ENCODE measurements at regions of chr17 and their contacts with region 1.

Region 1: GRCh38 chr17:19648475-19649406 is at the start of gene ALDH3A2:
- DNase-seq: peak; percentile 99 to 100
- ATAC-seq: peak; percentile 100
- H3K4me3 ChIP-seq: peak within 1 kb of the TSS; percentile 56 to 90
- H3K27ac ChIP-seq: peak within 1 kb of the TSS; percentile 52 to 98
- H3K4me1 ChIP-seq: peaks cover 0 to 23% of the 10 kb centered on the region in 2 donors
- H3K27me3 ChIP-seq: no peaks in the 10 kb centered on the region
- total RNA-seq, gene ALDH3A2: 55.7 to 78.6 TPM

Region 2: DNA sequence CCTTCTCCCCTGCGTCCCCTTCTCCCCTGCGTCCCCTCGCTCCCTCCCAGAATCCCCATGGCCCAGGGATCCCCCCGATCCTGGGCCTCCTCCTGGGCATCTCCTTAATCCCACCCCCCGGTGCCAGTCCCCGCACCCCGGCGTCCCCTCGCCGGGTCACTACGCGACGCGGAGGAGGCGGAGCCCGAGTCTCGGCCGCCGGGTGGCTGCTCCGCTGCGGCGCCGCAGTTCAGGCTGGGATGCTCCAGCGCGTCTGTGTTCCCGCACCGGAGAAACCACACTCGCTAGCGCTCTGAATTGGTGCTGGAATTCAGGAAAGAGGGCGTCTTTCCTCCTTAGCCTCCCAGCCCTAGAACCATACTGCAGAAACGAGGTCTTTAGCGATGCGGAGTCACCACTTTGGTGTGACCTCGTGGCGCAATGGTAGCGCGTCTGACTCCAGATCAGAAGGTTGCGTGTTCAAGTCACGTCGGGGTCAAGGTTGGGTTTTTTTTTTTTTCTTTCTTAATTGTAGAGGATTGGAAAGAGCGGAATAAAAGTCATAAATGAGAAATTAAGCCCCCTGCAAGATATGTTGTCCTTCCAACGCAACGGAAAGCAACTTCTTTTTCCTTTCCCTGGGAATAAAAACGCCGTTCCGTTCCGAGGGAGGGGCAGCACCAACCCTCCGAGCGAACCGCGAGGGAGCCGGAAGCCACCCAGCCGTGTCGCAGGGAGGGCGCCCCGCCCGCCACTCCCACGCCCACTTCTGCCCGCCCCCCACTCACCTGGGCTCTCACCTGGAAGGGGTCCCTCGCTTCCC is 140.8 kb before region 1 on chr17:
- intact Hi-C with region 1: loop called (anchors 5 kb)
- DNase-seq: peak; percentile 89 to 95
- ATAC-seq: peak; percentile 95
- H3K4me3 ChIP-seq: peak overlapping the region; percentile 73 to 77
- H3K27ac ChIP-seq: peak overlapping the region; percentile 88 to 90
- H3K4me1 ChIP-seq: no peaks in the 10 kb centered on the region
- H3K27me3 ChIP-seq: no peaks in the 10 kb centered on the region

Region 3: DNA sequence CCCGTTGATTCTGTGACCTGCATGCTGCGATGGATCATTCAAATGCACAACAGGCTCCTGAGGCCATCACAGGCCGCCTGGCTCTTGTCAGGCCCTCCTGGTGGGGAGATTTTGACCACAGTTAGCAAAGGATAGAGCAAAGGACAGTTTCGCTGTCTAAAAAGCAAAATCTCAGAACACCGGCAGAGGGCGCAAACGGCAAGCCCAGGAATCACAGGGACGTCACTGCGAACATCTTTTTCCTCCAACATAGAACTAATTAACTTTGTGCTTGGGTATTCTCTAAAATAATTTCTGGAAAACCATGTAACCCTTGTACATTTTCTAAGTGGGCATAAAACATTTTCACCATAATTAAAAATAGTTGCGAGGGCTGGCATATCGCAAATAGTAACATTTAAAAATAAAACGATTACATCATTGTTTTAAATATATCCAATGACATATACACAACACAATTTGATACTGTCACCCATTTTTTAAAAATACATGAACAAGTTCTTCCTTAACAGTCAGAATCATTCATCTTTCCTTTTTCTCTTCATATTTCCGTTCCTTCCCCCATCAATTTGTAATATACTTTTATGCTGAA is 134.7 kb before region 1 on chr17:
- intact Hi-C with region 1: loop called (anchors 5 kb)
- DNase-seq: peak; percentile 75 to 86
- ATAC-seq: peak; percentile 90
- H3K4me3 ChIP-seq: no peak overlapping the region
- H3K27ac ChIP-seq: peak overlapping the region; percentile 71 to 88
- H3K4me1 ChIP-seq: no peaks in the 10 kb centered on the region
- H3K27me3 ChIP-seq: no peaks in the 10 kb centered on the region

Region 4: GRCh38 chr17:19546289-19547065 is 102.3 kb before region 1 on chr17:
- intact Hi-C with region 1: no loop called
- DNase-seq: peak; percentile 66 to 78
- ATAC-seq: no peak
- H3K4me3 ChIP-seq: no peak overlapping the region
- H3K27ac ChIP-seq: no peak overlapping the region
- H3K4me1 ChIP-seq: no peaks in the 10 kb centered on the region
- H3K27me3 ChIP-seq: no peaks in the 10 kb centered on the region

Region 5: DNA sequence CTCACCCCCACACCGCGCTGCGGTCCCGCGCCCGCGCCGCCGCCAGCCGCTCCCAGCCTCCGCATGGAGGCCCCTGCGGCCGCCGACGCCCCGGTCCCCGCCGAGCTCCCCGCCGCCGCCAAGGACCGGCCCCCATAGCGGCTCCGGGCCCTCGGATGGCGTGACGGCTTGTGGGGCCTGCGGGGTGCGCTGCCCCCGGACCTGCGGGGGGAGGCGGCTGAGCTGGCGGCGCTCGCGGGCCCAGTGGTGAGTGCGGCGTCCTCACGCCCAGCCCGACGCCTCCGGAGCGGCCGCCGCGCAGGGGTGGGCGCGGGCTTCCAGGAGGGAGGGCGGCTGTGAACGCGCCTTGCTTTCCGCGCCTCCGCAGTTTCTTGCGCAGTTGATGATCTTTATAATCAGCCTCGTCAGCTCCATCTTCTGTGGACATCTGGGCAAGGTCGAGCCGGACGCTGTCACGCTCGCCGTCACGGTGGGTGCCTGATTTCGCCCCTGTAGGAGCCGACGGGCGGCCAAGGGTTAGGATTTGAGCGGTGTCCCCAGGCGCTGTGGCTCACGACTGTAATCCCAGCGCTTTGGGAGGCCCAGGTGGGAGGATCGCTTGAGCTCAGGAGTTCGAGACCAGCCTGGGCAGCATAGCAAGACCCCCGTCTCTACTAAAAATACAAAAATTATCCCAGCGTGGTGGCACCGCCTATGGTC is 68.7 kb before region 1 on chr17:
- intact Hi-C with region 1: loop called in 1 of 2 experiments (anchors 5 kb)
- DNase-seq: peak in 1 of 2 donors; percentile 83
- ATAC-seq: peak; percentile 62
- H3K4me3 ChIP-seq: peak overlapping the region; percentile 15 to 48
- H3K27ac ChIP-seq: no peak overlapping the region
- H3K4me1 ChIP-seq: no peaks in the 10 kb centered on the region
- H3K27me3 ChIP-seq: no peaks in the 10 kb centered on the region

Region 6: GRCh38 chr17:19678581-19679453 is 30.1 kb after region 1 on chr17:
- intact Hi-C with region 1: no loop called
- DNase-seq: no peak
- ATAC-seq: no peak
- H3K4me3 ChIP-seq: no peak overlapping the region
- H3K27ac ChIP-seq: no peak overlapping the region
- H3K4me1 ChIP-seq: no peaks in the 10 kb centered on the region
- H3K27me3 ChIP-seq: no peaks in the 10 kb centered on the region

Region 7: DNA sequence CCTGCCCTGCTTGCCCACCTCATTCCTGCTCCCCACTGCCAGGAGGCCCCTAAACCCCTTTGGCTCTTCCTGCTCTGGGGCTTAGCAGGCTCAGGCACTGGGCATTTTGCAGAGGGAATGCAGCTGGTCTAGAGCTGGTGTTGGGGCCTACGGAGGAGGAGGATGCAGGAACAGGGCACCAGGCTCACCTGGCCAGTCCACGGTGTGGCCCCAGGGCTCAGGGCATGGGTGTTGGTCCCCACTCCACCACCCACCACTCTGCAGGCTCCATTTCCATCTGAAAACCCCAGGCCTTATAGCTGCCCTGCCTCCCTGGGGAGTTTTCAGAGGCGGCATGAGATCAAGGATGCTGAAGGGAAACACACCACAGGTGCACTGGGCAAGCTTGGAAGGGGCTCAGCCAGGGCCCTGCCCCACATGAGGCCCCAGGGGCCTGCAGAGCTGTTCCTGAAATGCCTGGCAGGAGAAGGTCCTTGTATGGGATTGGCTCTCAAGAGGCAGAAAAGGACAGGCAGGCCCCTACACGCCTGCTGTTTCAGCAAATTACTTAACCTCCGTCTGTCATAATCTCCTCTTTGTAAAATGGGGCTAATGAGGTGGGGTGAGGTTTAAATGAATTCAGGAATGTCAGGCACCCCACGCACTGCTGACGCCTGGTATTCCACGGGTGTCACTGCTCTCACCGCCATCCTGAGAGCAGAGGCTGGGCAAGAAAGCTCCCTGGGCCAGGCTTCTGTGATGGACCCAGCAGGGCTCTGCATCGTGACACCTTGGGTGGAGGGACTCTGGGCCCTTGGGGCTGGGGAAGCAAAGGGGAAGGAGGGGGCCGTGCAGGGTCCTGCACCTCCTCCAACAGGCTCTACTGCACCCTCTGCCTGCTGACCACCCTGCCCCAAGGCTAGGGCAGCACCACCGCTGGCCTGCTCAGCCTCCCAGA is 58.3 kb after region 1 on chr17:
- intact Hi-C with region 1: no loop called
- DNase-seq: no peak
- ATAC-seq: no peak
- H3K4me3 ChIP-seq: no peak overlapping the region
- H3K27ac ChIP-seq: no peak overlapping the region
- H3K4me1 ChIP-seq: no peaks in the 10 kb centered on the region
- H3K27me3 ChIP-seq: no peaks in the 10 kb centered on the region

Region 8: DNA sequence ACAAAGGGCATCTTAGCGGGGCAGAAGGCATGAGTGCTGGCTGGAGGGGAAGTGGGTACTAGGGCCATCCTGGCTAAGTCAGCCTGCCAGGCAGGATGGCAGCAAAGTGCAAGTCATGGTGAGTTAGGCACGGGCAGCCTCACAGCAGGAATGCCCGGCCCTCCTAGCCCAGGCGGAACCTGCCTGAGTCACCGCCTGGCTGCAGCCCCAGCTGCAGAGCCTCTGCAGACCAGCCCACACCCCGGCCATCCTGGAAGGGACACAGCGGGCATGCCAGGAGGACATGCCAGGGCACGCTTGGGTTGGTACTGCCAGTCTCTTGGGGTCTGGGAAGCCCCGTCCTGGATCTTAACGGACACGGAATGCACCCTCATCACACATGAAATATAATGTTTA is 104.3 kb after region 1 on chr17:
- intact Hi-C with region 1: loop called in 1 of 2 experiments (anchors 5 kb)
- DNase-seq: peak; percentile 94 to 95
- ATAC-seq: peak; percentile 94
- H3K4me3 ChIP-seq: no peak overlapping the region
- H3K27ac ChIP-seq: peak overlapping the region; percentile 71 to 98
- H3K4me1 ChIP-seq: peaks cover 0 to 2% of the 10 kb centered on the region in 2 donors
- H3K27me3 ChIP-seq: no peaks in the 10 kb centered on the region